OCI-LY7 (cell line): ENCODE measurements at regions of chr6 and their contacts with region 1.

Region 1: DNA sequence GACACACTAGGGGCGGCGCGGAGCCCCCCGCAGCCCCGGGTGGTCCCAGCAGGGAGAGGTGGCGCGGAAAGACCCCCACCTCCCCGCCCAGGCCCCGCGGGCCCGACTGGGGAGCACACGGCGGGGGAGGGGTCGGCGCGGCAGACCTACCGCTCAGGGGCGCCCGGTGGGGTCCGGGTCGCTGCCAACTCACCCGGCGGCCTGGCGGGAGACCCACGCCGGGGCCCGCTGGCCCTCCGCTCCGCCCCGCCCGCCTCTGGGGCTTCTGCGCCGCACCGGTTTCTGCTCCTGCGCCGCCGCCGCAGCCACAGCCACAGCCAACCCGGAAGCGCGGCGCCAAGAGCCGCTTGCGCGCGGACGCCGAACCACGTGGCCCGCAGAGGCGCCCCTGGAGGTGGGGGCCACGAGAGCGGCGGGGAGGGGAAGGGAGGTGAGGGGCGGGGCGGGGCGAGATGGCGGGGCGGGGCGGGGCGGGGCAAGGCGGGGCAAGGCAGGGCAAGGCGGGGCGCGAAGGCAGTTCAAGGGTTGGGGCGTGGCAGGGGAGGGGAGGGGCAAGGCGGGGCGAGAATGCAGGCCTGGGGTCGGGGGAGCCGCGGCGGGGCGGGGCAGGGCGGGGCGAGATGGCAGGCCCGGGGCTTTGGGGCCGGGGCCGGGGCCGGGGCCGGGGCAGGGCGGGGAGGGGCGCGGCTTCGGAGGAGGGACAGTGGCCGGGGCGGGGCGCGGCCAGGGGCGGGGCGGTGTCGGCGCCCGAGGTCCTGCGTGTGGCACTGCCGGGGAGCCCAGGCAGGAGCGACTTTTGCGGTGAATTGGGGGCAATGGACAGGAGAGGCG is at the start of gene ZBTB24:
- DNase-seq: peak; percentile 95
- H3K4me3 ChIP-seq: peak within 1 kb of the TSS; percentile 96
- H3K27ac ChIP-seq: peak within 1 kb of the TSS; percentile 51
- H3K4me1 ChIP-seq: peaks cover 49% of the 10 kb centered on the region
- CTCF ChIP-seq: no peak
- total RNA-seq, gene ZBTB24: 13.7 and 15.3 TPM in 2 replicates

Region 2: DNA sequence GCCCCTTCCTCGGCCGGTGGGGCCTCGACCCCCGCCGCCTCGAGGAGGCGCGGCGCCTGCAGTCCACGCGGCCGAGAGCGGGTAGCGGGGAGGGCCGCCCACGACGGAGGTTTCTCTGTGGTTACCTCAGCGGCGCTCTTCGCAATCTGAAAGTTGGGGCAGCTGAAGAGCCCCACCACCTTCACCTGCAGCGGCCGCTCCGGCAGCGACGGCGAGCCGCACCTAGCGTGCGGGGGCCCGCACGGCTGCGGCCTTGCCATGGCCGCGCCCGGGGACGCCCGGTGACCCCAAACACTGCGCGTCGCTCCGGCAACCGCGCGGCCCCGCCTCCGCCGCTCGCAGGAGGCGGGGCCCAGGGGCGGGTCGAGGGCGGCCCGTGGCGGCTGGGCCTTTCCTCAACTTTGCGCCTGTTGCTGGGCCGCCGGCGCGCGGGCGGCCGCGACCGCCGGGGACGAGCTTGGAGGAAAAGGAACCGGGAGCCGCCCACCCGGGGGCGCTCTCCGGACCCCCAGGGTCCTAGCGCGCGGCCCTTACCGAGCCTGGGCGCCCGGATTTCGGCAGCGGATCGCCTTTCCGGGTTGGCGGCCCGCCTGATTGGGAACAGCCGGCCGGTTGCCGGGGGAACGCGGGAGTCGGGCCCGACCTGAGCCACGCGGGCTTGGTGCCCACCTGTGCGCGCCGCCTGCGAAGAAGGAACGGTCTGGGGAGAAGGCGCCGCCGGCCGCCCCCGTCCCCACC is 42.6 kb before region 1 on chr6 and contains the starts of genes PPIL6 and SMPD2:
- CTCF ChIA-PET with region 1: no interaction called
- POLR2A ChIA-PET with region 1: interaction called, 3 read pairs
- intact Hi-C with region 1: loop called (anchors 2 kb)
- DNase-seq: peak; percentile 89
- H3K4me3 ChIP-seq: peak within 1 kb of the TSS; percentile 83
- H3K27ac ChIP-seq: peak within 1 kb of the TSS; percentile 57
- H3K4me1 ChIP-seq: peaks cover 18% of the 10 kb centered on the region
- CTCF ChIP-seq: peak; percentile 57
- total RNA-seq, gene PPIL6: 0.15 and 1.6 TPM in 2 replicates
- total RNA-seq, gene SMPD2: 18.4 and 24.4 TPM in 2 replicates